GM12878 (cell line): ENCODE measurements at regions of chr12 and their contacts with region 1.

Region 1: GRCh38 chr12:53746592-53747092 is 5.1 kb downstream of the CISTR start:
- DNase-seq: peak; percentile 35
- ATAC-seq: peak; percentile 55
- H3K4me3 ChIP-seq: no peak overlapping the region
- H3K27ac ChIP-seq: no peak overlapping the region
- H3K4me1 ChIP-seq: peaks cover 9% of the 10 kb centered on the region
- H3K27me3 ChIP-seq: peaks cover 0 to 7% of the 10 kb centered on the region in 2 experiments; a peak in 1 of 4 replicates
- CTCF ChIP-seq: peak; percentile 100; a peak in 5 of 6 replicates
- EP300 ChIP-seq: no peak
- POLR2A ChIP-seq: no peak
- RAD21 ChIP-seq: peak; percentile 87

Region 2: DNA sequence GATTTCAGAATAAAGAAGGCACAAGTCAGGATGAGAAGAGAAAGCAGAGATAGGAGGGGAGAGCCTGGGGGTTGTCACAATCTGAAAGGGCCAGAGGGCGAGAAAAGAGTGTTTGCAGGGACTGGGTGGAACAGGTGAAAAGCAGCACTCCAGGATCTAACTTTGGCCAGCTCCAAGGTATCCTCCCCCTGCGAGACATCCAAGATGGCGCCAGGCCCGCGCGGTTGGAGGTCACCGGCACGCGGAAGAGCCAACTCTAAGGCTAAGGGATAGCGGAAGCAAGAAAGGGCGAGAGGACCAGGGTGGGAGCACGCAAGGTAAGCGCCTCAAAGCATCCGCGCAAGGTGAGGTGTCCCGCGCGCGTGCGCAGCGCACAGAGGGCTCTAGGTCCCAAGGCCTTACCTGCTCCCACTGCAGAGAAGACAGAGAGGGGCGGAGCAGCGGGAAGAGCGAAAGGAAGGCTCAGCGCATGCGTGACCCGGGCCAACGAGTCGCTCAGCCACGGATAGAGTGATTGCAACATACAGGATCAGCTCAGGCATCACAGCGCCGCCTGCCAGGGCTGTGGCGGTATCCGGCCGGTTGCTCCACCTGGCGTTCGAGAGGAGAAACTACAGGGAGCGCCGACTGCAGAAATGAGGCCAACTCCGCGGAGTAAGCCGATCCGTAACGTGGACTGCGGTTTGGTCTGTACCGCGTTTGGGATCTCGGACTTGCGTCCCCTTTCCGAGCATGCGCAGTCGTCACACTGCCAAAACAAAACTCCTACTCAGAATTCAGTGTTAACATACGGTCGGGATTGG is 70.8 kb before region 1 on chr12 and contains the start of gene ATP5MC2:
- CTCF ChIA-PET with region 1: interaction called, 81 read pairs
- POLR2A ChIA-PET with region 1: interaction called, 3 read pairs
- RAD21 ChIA-PET with region 1: interaction called, 6 read pairs
- SMC1A ChIA-PET with region 1: interaction called, 6 read pairs
- in situ Hi-C with region 1: no loop called
- intact Hi-C with region 1: no loop called
- DNase-seq: peak; percentile 100
- ATAC-seq: peak; percentile 97
- H3K4me3 ChIP-seq: peak within 1 kb of the TSS; percentile 97
- H3K27ac ChIP-seq: peak within 1 kb of the TSS; percentile 88
- H3K4me1 ChIP-seq: peaks cover 7% of the 10 kb centered on the region
- H3K27me3 ChIP-seq: peaks cover 2 to 3% of the 10 kb centered on the region in 2 experiments; a peak in 1 of 4 replicates
- CTCF ChIP-seq: peak; percentile 100; a peak in 5 of 6 replicates
- EP300 ChIP-seq: no peak
- POLR2A ChIP-seq: peak; percentile 96
- RAD21 ChIP-seq: peak; percentile 89
- polyA plus RNA-seq, gene ATP5MC2: 972 to 1,090 TPM

Region 3: GRCh38 chr12:53696285-53696654 is 50.4 kb before region 1 on chr12:
- CTCF ChIA-PET with region 1: interaction called, 459 read pairs
- POLR2A ChIA-PET with region 1: interaction called, 5 read pairs
- RAD21 ChIA-PET with region 1: interaction called, 70 read pairs
- SMC1A ChIA-PET with region 1: interaction called, 112 read pairs
- in situ Hi-C with region 1: loop called (anchors 5 kb)
- intact Hi-C with region 1: loop called (anchors 1 kb)
- DNase-seq: peak; percentile 25
- ATAC-seq: peak; percentile 84
- H3K4me3 ChIP-seq: 0 out of 2 replicates have a peak overlapping the region, but pooled peaks have one; percentile 1
- H3K27ac ChIP-seq: no peak overlapping the region
- H3K4me1 ChIP-seq: peaks cover 5% of the 10 kb centered on the region; the same call in 1 of the 2 replicates
- H3K27me3 ChIP-seq: peaks cover 16 to 43% of the 10 kb centered on the region in 2 experiments
- CTCF ChIP-seq: no peak
- EP300 ChIP-seq: no peak
- POLR2A ChIP-seq: no peak
- RAD21 ChIP-seq: no peak

Region 4: DNA sequence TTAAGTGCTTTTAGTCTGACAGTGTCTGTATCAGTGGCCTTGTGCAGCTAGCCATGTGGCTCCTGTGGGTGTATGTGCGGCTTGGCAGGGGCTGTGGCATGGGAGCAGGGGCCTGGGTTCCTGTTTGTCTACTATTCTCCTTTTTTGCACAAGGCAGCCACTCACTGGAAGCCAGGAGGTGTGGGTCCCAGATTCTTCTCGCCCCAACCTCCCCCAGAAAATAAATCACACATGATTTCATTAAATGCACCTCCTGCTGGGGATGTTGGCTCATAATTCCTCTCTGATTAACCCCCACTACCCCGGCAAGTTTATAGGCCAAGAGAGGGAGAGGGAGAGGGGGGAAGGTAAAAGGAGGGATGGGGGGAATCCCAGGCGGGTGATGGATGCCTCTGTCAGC is 37.0 kb before region 1 on chr12:
- CTCF ChIA-PET with region 1: interaction called, 101 read pairs
- POLR2A ChIA-PET with region 1: interaction called, 3 read pairs
- RAD21 ChIA-PET with region 1: interaction called, 17 read pairs
- SMC1A ChIA-PET with region 1: interaction called, 18 read pairs
- in situ Hi-C with region 1: loop called (anchors 5 kb)
- intact Hi-C with region 1: no loop called
- DNase-seq: no peak
- ATAC-seq: no peak
- H3K4me3 ChIP-seq: no peak overlapping the region
- H3K27ac ChIP-seq: no peak overlapping the region
- H3K4me1 ChIP-seq: no peaks in the 10 kb centered on the region
- H3K27me3 ChIP-seq: peaks cover 0 to 6% of the 10 kb centered on the region in 2 experiments; a peak in 1 of 4 replicates
- CTCF ChIP-seq: no peak
- EP300 ChIP-seq: no peak
- POLR2A ChIP-seq: no peak
- RAD21 ChIP-seq: no peak

Region 5: DNA sequence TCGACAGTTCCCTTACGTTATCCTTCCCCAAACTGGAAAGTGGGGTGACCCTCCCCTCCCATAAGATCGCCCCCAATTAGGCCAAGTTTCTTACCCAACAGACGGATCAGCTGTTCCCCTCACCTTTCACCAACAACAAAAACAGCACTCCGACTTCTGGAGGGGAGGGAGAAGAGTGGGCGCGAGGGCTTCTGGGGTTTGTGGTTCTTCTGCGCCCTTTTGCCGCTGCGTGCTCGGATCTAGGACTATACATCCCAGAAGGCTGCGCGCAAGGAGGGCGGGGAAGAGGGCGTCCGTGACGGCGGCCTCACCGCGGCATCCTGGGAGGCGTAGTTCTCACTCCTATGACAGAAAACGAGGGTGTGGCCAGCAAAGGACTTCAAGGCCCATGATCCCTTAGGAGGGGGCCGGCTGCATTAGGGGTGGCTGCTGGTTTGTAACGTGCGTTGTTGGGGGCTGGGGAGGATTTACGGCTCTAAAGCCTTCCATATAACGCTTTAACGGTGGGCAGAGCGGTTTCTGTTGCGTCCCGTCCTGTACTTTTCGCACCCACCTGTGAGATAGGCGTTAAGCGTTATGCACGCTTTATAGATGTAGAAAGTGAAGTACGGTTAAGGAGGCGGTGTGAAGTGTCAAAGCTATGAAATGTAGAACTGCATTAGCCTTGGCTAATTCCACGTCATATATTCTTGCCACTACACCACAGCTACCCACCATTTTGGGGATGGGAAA is 19.2 kb before region 1 on chr12 and contains the start of gene CALCOCO1:
- CTCF ChIA-PET with region 1: interaction called, 341 read pairs
- POLR2A ChIA-PET with region 1: interaction called, 3 read pairs
- RAD21 ChIA-PET with region 1: interaction called, 48 read pairs
- SMC1A ChIA-PET with region 1: interaction called, 128 read pairs
- in situ Hi-C with region 1: no loop called
- intact Hi-C with region 1: no loop called
- DNase-seq: peak; percentile 95
- ATAC-seq: peak; percentile 99
- H3K4me3 ChIP-seq: peak within 1 kb of the TSS; percentile 74
- H3K27ac ChIP-seq: 0 out of 2 replicates have a peak within 1 kb of the TSS, but pooled peaks have one; percentile 24
- H3K4me1 ChIP-seq: peaks cover 17% of the 10 kb centered on the region
- H3K27me3 ChIP-seq: no peaks in the 10 kb centered on the region; a peak in 1 of 4 replicates
- CTCF ChIP-seq: no peak
- EP300 ChIP-seq: no peak; a peak in 2 of 4 replicates
- POLR2A ChIP-seq: peak; percentile 68
- RAD21 ChIP-seq: no peak
- polyA plus RNA-seq, gene CALCOCO1: 2.8 to 4.4 TPM

Region 6: DNA sequence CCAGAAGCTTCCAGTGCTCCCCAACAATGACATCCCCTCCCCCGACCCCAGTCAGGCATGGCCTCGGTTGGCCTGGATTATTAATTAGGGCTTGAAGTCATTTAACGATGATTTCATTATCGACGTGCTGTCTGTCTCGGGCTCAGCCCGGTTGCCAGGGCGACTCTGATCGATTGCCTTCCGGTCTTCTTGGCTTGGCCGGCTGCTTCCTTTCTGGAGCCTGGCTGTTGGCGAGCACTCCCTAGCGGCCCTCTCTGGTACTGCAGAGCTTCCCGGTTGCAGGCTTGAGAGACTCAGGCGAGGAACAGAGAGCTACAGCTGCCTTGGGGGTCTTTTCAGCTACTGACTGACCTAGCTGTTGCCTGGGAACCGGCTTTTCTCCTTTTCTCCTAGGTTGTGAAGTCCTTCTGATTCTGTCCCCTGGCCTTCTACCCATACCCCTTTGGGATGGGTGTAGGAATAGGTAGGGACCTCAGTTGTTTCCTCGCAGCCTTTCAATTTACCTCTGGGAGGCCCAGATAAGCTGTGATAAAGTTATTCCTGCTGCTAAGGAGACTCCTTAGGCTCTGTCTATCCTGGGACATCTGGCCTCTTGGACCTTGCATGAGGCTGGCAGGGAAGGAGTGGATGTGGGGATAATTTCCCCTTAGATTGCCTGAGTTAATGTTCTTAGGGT is 10.6 kb after region 1 on chr12:
- CTCF ChIA-PET with region 1: interaction called, 443 read pairs
- POLR2A ChIA-PET with region 1: interaction called, 23 read pairs
- RAD21 ChIA-PET with region 1: interaction called, 129 read pairs
- SMC1A ChIA-PET with region 1: interaction called, 156 read pairs
- in situ Hi-C with region 1: no loop called
- intact Hi-C with region 1: no loop called
- DNase-seq: no peak
- ATAC-seq: peak; percentile 74
- H3K4me3 ChIP-seq: peak overlapping the region; percentile 54
- H3K27ac ChIP-seq: peak overlapping the region; percentile 48
- H3K4me1 ChIP-seq: peaks cover 51% of the 10 kb centered on the region
- H3K27me3 ChIP-seq: peaks cover 0 to 5% of the 10 kb centered on the region in 2 experiments; a peak in 1 of 4 replicates
- CTCF ChIP-seq: peak; percentile 96 to 99 (median 98); a peak in 5 of 6 replicates
- EP300 ChIP-seq: no peak
- POLR2A ChIP-seq: no peak
- RAD21 ChIP-seq: peak; percentile 67

Region 7: GRCh38 chr12:53770281-53770680 is 23.6 kb after region 1 on chr12:
- CTCF ChIA-PET with region 1: interaction called, 14 read pairs
- POLR2A ChIA-PET with region 1: interaction called, 9 read pairs
- RAD21 ChIA-PET with region 1: no interaction called
- SMC1A ChIA-PET with region 1: interaction called, 11 read pairs
- in situ Hi-C with region 1: no loop called
- intact Hi-C with region 1: no loop called
- DNase-seq: no peak
- ATAC-seq: no peak
- H3K4me3 ChIP-seq: no peak overlapping the region
- H3K27ac ChIP-seq: no peak overlapping the region
- H3K4me1 ChIP-seq: no peaks in the 10 kb centered on the region
- H3K27me3 ChIP-seq: no peaks in the 10 kb centered on the region
- CTCF ChIP-seq: no peak
- EP300 ChIP-seq: no peak
- POLR2A ChIP-seq: no peak
- RAD21 ChIP-seq: no peak

Region 8: DNA sequence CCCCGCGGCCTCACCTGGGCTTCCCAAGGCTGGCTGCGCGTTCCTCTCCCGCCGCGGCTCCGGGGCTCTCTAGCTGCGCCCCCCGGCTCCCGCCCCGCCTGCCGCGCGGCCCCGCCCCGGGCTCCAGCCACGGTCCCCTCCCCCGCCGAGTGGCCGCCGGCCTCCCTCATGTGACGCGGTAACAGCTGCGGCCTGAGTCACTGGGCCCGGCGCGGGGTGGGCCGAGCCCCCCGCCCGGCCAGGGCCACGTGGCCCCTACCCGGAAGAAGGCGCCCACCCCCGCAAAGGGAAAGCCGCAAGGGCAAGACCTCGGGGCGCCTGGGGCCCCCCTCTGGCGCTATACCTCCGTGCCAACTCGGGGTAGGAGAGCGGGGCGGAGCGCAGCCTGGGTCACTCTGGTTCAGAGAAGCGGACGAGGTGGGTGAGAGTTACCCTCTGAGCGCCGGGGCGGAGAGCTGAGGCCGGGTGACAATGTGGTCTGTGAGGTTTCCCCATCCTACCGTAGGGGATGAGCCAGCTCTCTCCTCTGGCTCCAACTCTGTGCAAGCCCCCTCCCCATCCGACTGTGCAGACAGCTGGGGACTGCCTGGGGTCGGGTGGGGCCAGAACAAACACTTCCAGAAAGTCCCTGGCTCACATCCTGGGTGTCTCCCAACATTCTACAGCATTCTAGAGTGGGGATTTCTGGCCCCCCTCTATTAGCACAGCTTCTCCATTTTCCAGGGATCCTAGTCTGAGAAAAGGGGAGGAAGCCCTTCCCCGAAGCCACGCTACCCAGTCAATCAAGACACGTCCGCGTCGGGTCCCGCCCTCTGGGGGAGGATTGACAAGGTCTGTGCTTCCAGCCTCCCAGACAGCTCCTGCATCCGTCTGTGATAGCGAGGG is 1982.5 kb after region 1 on chr12 and contains the start of gene CD63:
- CTCF ChIA-PET with region 1: no interaction called
- POLR2A ChIA-PET with region 1: no interaction called
- RAD21 ChIA-PET with region 1: no interaction called
- SMC1A ChIA-PET with region 1: no interaction called
- in situ Hi-C with region 1: no loop called
- intact Hi-C with region 1: no loop called
- DNase-seq: no peak
- ATAC-seq: peak; percentile 79
- H3K4me3 ChIP-seq: peak within 1 kb of the TSS; percentile 76
- H3K27ac ChIP-seq: peak within 1 kb of the TSS; percentile 68
- H3K4me1 ChIP-seq: peaks cover 11% of the 10 kb centered on the region
- H3K27me3 ChIP-seq: no peaks in the 10 kb centered on the region
- CTCF ChIP-seq: no peak; a peak in 1 of 6 replicates
- EP300 ChIP-seq: peak in 1 of 2 experiments; percentile 46; a peak in 1 of 4 replicates
- POLR2A ChIP-seq: peak; percentile 77
- RAD21 ChIP-seq: no peak
- polyA plus RNA-seq, gene CD63: 194 to 220 TPM